Panc1 (cell line): ENCODE measurements at regions of chr5 and their contacts with region 1.

Region 1: GRCh38 chr5:14608169-14608568 is 26.6 kb downstream of the OTULINL start:
- DNase-seq: no peak
- ATAC-seq: no peak
- H3K4me3 ChIP-seq: no peak overlapping the region
- H3K27ac ChIP-seq: no peak overlapping the region
- H3K4me1 ChIP-seq: no peaks in the 10 kb centered on the region
- H3K27me3 ChIP-seq: peaks cover 3% of the 10 kb centered on the region; the same call in 1 of the 2 replicates
- CTCF ChIP-seq: no peak

Region 2: GRCh38 chr5:14644623-14645237 is 36.6 kb after region 1 on chr5:
- CTCF ChIA-PET with region 1: no interaction called
- POLR2A ChIA-PET with region 1: no interaction called
- in situ Hi-C with region 1: no loop called
- intact Hi-C with region 1: no loop called
- DNase-seq: no peak
- ATAC-seq: no peak
- H3K4me3 ChIP-seq: no peak overlapping the region
- H3K27ac ChIP-seq: no peak overlapping the region
- H3K4me1 ChIP-seq: no peaks in the 10 kb centered on the region
- H3K27me3 ChIP-seq: peaks cover 8% of the 10 kb centered on the region
- CTCF ChIP-seq: no peak

Region 3: GRCh38 chr5:14959443-14960119 is 351.4 kb after region 1 on chr5:
- CTCF ChIA-PET with region 1: no interaction called
- POLR2A ChIA-PET with region 1: interaction called, 13 read pairs
- in situ Hi-C with region 1: no loop called
- intact Hi-C with region 1: no loop called
- DNase-seq: peak; percentile 64
- ATAC-seq: peak; percentile 68
- H3K4me3 ChIP-seq: no peak overlapping the region
- H3K27ac ChIP-seq: no peak overlapping the region
- H3K4me1 ChIP-seq: no peaks in the 10 kb centered on the region
- H3K27me3 ChIP-seq: no peaks in the 10 kb centered on the region
- CTCF ChIP-seq: no peak